WTC11 (cell line): ENCODE measurements at regions of chr12 and their contacts with region 1.

Region 1: GRCh38 chr12:97417568-97418218 is 44.9 kb upstream of the RMST start:
- DNase-seq: no peak
- ATAC-seq: no peak
- H3K4me3 Mint-ChIP-seq: no peak overlapping the region
- H3K27ac Mint-ChIP-seq: no peak overlapping the region
- H3K4me1 Mint-ChIP-seq: 0 out of 2 replicates have a peak, but pooled peaks cover 3% of the 10 kb centered on the region
- H3K27me3 Mint-ChIP-seq: no peaks in the 10 kb centered on the region
- CTCF ChIP-seq: no peak

Region 2: GRCh38 chr12:97404543-97404942 is 13.2 kb before region 1 on chr12:
- CTCF ChIA-PET with region 1: interaction called, 11 read pairs
- POLR2A ChIA-PET with region 1: no interaction called
- DNase-seq: peak; percentile 65
- ATAC-seq: peak; percentile 97
- H3K4me3 Mint-ChIP-seq: no peak overlapping the region
- H3K27ac Mint-ChIP-seq: no peak overlapping the region
- H3K4me1 Mint-ChIP-seq: peaks cover 12% of the 10 kb centered on the region
- H3K27me3 Mint-ChIP-seq: no peaks in the 10 kb centered on the region
- CTCF ChIP-seq: peak; percentile 72

Region 3: DNA sequence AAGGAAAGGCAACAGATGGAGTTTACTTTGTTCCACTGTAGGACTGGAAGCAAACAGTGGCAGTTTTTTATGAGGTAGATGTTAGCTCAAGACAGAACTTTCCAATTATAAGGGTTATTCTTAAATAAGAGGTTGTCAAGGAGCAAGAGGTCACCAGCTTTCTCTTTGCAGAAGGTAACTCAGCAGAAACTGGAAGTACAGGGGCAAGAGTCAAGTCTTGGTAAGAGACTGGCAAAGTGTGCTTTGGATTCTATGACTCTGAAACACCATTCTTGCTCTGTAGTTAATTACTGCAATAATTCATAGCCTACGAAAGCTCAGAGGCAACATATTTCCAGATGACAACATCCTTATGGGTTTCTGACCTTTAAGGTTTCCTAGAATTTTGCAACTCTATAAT is 96.2 kb after region 1 on chr12:
- CTCF ChIA-PET with region 1: no interaction called
- POLR2A ChIA-PET with region 1: no interaction called
- DNase-seq: no peak
- ATAC-seq: no peak
- H3K4me3 Mint-ChIP-seq: no peak overlapping the region
- H3K27ac Mint-ChIP-seq: peak overlapping the region; percentile 6; the same call in 1 of the 2 replicates
- H3K4me1 Mint-ChIP-seq: no peaks in the 10 kb centered on the region
- H3K27me3 Mint-ChIP-seq: no peaks in the 10 kb centered on the region
- CTCF ChIP-seq: no peak